ENCODE measurements at regions of chr6 and their contacts with region 1.

Region 1: GRCh38 chr6:151014404-151015100 is 149.1 kb downstream of the MTHFD1L start:
- DNase-seq: peak; percentile 73
- H3K4me3 Mint-ChIP-seq: no peak overlapping the region
- H3K27ac Mint-ChIP-seq: peak overlapping the region; percentile 45
- H3K4me1 Mint-ChIP-seq: peaks cover 8% of the 10 kb centered on the region
- H3K27me3 Mint-ChIP-seq: no peaks in the 10 kb centered on the region
- CTCF ChIP-seq: peak; percentile 84

Region 2: GRCh38 chr6:150486034-150486433 is 528.5 kb before region 1 on chr6:
- CTCF ChIA-PET with region 1: no interaction called
- intact Hi-C with region 1: no loop called
- DNase-seq: no peak
- H3K4me3 Mint-ChIP-seq: no peak overlapping the region
- H3K27ac Mint-ChIP-seq: no peak overlapping the region
- H3K4me1 Mint-ChIP-seq: no peaks in the 10 kb centered on the region
- H3K27me3 Mint-ChIP-seq: no peaks in the 10 kb centered on the region
- CTCF ChIP-seq: no peak

Region 3: DNA sequence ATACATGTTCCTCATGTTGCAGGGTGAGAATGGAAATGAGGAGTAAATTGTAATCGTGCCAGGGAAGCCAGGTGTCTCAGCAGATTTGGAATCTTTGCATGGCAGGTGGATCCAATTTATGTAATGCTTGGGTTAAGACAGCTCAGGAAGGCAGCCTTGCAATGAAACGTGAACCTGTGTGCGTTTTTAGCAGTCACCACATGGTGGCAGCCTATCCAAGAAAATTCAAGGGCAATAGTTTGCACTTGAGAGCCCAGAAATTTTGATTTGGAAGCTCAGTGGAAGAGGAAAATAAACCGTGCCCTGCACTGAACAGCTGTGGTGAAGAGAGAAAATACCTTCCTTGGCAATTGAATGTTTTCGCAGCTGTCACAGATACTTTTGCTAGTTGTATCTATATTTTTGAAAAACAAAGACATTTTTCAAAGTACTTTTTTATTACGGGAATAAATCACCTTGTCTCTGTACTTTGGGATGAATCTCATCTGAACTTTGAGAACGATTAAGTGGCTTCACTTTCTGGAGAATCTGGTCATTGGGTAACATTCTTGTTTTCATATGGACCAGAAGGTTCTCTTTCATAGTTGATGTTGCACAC is 122.6 kb before region 1 on chr6:
- CTCF ChIA-PET with region 1: interaction called, 13 read pairs
- intact Hi-C with region 1: no loop called
- DNase-seq: peak; percentile 67
- H3K4me3 Mint-ChIP-seq: no peak overlapping the region
- H3K27ac Mint-ChIP-seq: no peak overlapping the region
- H3K4me1 Mint-ChIP-seq: peaks cover 18% of the 10 kb centered on the region
- H3K27me3 Mint-ChIP-seq: no peaks in the 10 kb centered on the region
- CTCF ChIP-seq: peak; percentile 42

Region 4: DNA sequence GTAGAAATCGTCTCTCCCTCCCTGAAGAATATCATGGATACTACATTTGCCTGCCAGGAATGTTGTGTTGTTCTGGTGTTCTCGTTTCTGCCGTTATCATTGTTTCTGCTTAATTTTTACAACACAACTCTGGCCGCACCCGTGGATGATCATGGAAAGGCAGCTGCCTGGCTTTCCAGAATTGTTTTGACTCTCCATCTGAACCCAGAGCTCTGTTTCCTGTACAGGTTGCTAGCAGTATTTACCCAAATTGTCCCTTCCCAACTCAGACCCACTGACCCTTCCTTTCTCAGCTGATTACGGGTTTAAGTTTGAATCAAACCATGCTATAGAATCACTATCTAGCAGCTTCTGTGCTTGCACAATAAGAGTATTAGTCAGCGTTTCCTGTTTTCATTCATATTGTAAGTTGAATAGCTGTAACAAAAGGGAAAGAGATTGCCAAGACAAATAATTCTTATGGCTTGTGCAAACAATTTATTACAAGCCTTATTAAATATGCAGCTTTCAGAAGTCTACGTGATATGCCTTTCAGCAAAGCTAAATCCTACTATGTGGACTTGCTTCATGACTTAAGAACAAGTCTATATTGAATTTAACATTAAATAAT is 10.0 kb before region 1 on chr6:
- CTCF ChIA-PET with region 1: interaction called, 14 read pairs
- intact Hi-C with region 1: no loop called
- DNase-seq: peak; percentile 2
- H3K4me3 Mint-ChIP-seq: peak overlapping the region; percentile 59
- H3K27ac Mint-ChIP-seq: peak overlapping the region; percentile 82
- H3K4me1 Mint-ChIP-seq: peaks cover 18% of the 10 kb centered on the region
- H3K27me3 Mint-ChIP-seq: no peaks in the 10 kb centered on the region
- CTCF ChIP-seq: no peak

Region 5: DNA sequence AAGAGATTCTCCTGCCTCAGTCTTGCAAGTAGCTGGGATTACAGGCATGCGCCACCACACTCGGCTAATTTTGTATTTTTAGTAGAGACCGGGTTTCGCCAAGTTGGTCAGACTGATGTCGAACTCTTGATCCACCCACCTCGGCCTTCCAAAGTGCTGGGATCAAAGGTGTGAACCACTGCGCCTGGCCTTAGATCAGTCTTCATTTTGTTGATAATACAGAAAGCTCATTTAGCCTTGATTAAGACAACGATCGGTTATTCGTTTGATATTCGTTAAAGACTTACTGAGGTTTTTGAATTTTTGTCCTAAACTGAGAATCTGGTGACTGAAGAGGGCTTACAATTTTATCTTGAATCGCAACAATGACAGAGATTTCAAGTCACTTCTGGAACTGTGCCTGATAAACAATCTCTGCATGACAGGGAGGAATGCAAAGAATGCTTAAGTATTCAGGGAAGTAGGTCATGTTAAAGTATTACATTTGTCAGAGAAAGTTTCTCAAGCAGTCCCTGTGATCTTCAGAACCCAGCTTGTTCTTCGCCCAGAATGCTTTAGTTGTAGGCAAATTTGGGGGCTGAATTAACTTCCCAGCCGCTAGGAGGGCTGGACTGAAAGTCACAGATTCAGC is 240.0 kb after region 1 on chr6:
- CTCF ChIA-PET with region 1: no interaction called
- intact Hi-C with region 1: loop called (anchors 10 kb)
- DNase-seq: peak; percentile 2
- H3K4me3 Mint-ChIP-seq: no peak overlapping the region
- H3K27ac Mint-ChIP-seq: no peak overlapping the region
- H3K4me1 Mint-ChIP-seq: peaks cover 10% of the 10 kb centered on the region
- H3K27me3 Mint-ChIP-seq: no peaks in the 10 kb centered on the region
- CTCF ChIP-seq: no peak

Region 6: GRCh38 chr6:151323791-151324487 is 309.4 kb after region 1 on chr6:
- CTCF ChIA-PET with region 1: interaction called, 59 read pairs
- intact Hi-C with region 1: loop called (anchors 1 kb)
- DNase-seq: peak; percentile 84
- H3K4me3 Mint-ChIP-seq: peak overlapping the region; percentile 76
- H3K27ac Mint-ChIP-seq: peak overlapping the region; percentile 61
- H3K4me1 Mint-ChIP-seq: peaks cover 14% of the 10 kb centered on the region
- H3K27me3 Mint-ChIP-seq: no peaks in the 10 kb centered on the region
- CTCF ChIP-seq: peak; percentile 87

Region 7: DNA sequence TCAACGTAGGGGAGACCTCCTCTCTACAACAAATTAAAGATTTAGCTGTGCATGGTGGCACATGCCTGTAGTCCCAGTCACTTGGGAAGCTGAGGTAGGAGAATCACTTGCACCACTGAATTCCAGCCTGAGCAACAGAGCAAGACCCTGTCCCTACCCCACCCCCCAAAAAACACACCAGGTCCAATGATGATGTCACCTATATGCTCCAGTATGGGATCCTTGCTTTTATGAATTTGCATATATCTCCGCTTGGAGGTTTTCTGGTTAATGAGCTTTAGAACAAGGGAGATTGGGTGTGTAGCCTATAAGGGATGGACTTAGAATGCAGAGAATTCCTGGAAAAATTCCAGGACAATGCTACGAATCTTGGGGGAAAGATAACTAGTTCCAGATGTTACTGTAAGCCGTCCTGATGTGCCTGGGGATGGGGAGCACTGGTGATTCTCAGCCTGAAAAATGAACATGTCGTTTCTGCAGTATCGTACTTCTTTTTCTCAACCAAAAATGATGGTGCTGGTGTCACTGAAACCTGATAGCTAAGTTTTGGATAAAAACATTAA is 315.7 kb after region 1 on chr6:
- CTCF ChIA-PET with region 1: interaction called, 59 read pairs
- intact Hi-C with region 1: loop called (anchors 2 kb)
- DNase-seq: no peak
- H3K4me3 Mint-ChIP-seq: no peak overlapping the region
- H3K27ac Mint-ChIP-seq: no peak overlapping the region
- H3K4me1 Mint-ChIP-seq: no peaks in the 10 kb centered on the region
- H3K27me3 Mint-ChIP-seq: no peaks in the 10 kb centered on the region
- CTCF ChIP-seq: no peak

Region 8: GRCh38 chr6:151335930-151336329 is 321.4 kb after region 1 on chr6:
- CTCF ChIA-PET with region 1: interaction called, 21 read pairs
- intact Hi-C with region 1: loop called (anchors 2 kb)
- DNase-seq: no peak
- H3K4me3 Mint-ChIP-seq: no peak overlapping the region
- H3K27ac Mint-ChIP-seq: no peak overlapping the region
- H3K4me1 Mint-ChIP-seq: no peaks in the 10 kb centered on the region
- H3K27me3 Mint-ChIP-seq: no peaks in the 10 kb centered on the region
- CTCF ChIP-seq: no peak